ENCODE measurements at regions of chr17 and their contacts with region 1.

Region 1: DNA sequence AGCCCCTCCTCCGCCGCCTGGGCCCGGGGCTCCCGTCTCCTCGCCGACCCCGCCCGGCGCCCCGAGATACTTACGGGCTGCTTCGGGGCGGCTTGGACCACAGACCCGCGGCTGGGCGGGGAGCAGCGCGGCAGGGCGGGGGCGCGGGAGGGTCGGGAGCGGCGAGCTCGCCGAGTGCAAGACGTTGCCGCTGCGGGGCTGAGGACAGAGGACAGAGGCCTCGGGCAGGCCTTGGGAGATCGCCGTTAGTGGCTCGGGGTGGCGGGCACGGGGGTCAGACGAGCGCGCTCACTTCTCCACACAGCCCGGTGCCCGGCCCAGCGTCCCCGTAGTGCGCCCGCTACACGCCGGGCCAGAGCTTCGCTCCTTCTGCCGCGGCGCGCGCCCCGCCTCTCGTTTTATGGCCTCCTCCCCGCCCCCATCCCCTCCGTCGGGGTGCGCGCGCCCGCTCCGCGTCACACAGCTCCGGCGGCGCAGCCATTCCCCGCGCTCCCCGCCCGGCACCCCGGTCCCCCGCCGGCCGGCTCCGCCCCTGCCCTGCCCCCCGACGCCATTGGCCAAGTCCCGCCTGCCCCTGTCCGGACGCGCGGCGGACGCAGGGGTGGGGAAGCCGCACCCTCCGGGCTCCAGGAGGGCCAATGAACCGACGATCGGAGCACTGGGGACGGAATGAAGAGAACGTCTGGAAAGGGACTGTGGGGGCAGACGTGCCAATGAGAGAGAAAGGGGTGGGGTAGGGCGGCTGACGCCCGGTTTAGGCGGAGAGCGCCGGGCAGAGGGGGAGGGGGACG is at the start of gene TOB1:
- DNase-seq: peak; percentile 99
- ATAC-seq: peak; percentile 78
- H3K4me3 Mint-ChIP-seq: peak within 1 kb of the TSS; percentile 96
- H3K27ac Mint-ChIP-seq: peak within 1 kb of the TSS; percentile 98
- H3K4me1 Mint-ChIP-seq: peaks cover 44% of the 10 kb centered on the region
- H3K27me3 Mint-ChIP-seq: no peaks in the 10 kb centered on the region
- total RNA-seq, gene TOB1: 31.3 to 43.0 TPM

Region 2: GRCh38 chr17:50507871-50508572 is 358.2 kb before region 1 on chr17 and contains the start of gene MYCBPAP:
- CTCF ChIA-PET with region 1: no interaction called
- POLR2A ChIA-PET with region 1: no interaction called
- intact Hi-C with region 1: loop called in 1 of 2 experiments (anchors 1 kb)
- DNase-seq: peak; percentile 85
- ATAC-seq: peak; percentile 38
- H3K4me3 Mint-ChIP-seq: peak within 1 kb of the TSS; percentile 72
- H3K27ac Mint-ChIP-seq: peak within 1 kb of the TSS; percentile 77
- H3K4me1 Mint-ChIP-seq: peaks cover 34% of the 10 kb centered on the region
- H3K27me3 Mint-ChIP-seq: peaks cover 4% of the 10 kb centered on the region
- total RNA-seq, gene MYCBPAP: 1.4 to 1.8 TPM

Region 3: GRCh38 chr17:50853015-50853615 is 13.1 kb before region 1 on chr17:
- CTCF ChIA-PET with region 1: interaction called, 60 read pairs
- POLR2A ChIA-PET with region 1: interaction called, 18 read pairs
- intact Hi-C with region 1: loop called (anchors 1 kb)
- DNase-seq: no peak
- ATAC-seq: no peak
- H3K4me3 Mint-ChIP-seq: no peak overlapping the region
- H3K27ac Mint-ChIP-seq: peak overlapping the region; percentile 78
- H3K4me1 Mint-ChIP-seq: peaks cover 13% of the 10 kb centered on the region
- H3K27me3 Mint-ChIP-seq: no peaks in the 10 kb centered on the region

Region 4: GRCh38 chr17:50919321-50920085 is 53.3 kb after region 1 on chr17:
- CTCF ChIA-PET with region 1: interaction called, 3 read pairs
- POLR2A ChIA-PET with region 1: interaction called, 16 read pairs
- intact Hi-C with region 1: loop called in 1 of 2 experiments (anchors 1 kb)
- DNase-seq: peak; percentile 90
- ATAC-seq: peak; percentile 87
- H3K4me3 Mint-ChIP-seq: peak overlapping the region; percentile 34
- H3K27ac Mint-ChIP-seq: peak overlapping the region; percentile 85
- H3K4me1 Mint-ChIP-seq: peaks cover 34% of the 10 kb centered on the region
- H3K27me3 Mint-ChIP-seq: no peaks in the 10 kb centered on the region

Region 5: DNA sequence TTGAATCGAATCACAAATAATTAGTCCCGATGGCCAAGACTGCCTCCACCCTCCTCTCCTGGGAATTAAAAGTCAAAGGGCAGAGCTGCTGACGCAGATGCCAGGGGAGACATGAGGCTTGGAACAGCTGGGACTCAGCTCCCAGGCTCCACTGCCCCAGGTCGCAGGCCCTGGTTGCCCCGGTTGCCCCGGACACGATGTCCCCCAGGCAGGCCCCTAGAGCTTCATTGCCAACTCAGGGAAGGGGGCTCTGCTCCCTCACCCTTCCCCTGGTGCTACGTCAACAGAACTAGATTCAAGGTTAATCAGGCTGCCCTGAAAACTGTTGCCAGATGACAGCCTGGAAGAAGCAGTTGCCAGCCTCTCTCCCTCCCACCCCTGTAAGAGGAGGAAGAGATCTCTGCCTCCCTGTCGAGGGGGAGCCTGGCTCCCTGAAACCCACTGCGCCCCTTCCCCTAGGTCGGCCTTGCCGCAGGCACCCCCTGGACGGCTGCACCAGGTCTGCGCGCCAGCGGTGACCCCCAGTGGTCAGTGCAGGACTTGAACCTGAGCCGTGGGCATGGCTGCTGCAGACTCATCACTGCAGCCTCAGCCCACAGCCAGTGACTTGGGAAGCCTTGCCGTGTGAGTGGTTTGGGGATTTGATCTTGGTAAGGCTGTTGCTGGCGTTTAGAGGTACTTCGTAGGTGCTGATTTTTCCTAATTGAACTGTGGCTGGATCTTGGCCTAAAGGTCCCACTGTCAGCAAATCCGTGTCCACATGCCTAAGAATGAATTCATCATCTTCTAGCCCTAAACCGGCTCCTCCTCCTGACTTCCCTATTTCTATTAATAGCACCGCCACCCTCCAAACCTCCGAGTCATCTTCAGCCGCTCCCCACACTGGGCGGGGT is 84.1 kb after region 1 on chr17:
- CTCF ChIA-PET with region 1: interaction called, 8 read pairs
- POLR2A ChIA-PET with region 1: interaction called, 16 read pairs
- intact Hi-C with region 1: loop called (anchors 1 to 2 kb)
- DNase-seq: peak; percentile 76
- ATAC-seq: peak; percentile 88
- H3K4me3 Mint-ChIP-seq: no peak overlapping the region
- H3K27ac Mint-ChIP-seq: no peak overlapping the region
- H3K4me1 Mint-ChIP-seq: peaks cover 16% of the 10 kb centered on the region
- H3K27me3 Mint-ChIP-seq: no peaks in the 10 kb centered on the region

Region 6: GRCh38 chr17:51153210-51154072 is 287.3 kb after region 1 on chr17 and contains the start of gene NME1:
- CTCF ChIA-PET with region 1: interaction called, 5 read pairs
- POLR2A ChIA-PET with region 1: interaction called, 7 read pairs
- intact Hi-C with region 1: loop called (anchors 1 kb)
- DNase-seq: peak; percentile 98
- ATAC-seq: peak; percentile 93
- H3K4me3 Mint-ChIP-seq: no peak within 1 kb of the TSS
- H3K27ac Mint-ChIP-seq: no peak within 1 kb of the TSS
- H3K4me1 Mint-ChIP-seq: peaks cover 8% of the 10 kb centered on the region
- H3K27me3 Mint-ChIP-seq: no peaks in the 10 kb centered on the region
- total RNA-seq, gene NME1: 293 to 310 TPM

Measured in activated CD4-positive, alpha-beta T cell treated with anti-CD3 and anti-CD28 coated beads for 36 hours (primary cell).